A673 (cell line): ENCODE measurements at regions of chr1 and their contacts with region 1.

Region 1: DNA sequence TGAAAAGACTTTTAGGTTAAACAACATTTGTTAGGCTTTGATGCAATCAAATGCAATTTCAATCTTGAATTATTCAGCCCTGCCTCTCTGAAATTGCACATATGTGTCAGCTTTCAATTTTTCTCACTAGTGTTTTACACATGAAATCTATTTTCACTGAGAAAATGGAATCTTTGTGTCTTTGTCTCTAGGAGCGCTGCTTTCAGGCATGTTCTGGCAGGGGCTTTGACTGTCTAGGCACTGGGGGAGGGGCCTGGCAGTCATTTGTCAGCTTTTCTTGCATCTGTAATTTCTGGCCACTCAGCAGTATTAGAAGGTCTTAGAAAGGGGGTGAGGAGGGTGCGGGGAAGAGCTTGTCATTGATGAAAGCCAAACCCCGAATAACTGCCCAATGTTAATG is 264.4 kb downstream of the PTPRC start:
- DNase-seq: peak; percentile 93
- H3K4me3 ChIP-seq: peak overlapping the region; percentile 23
- H3K27ac ChIP-seq: peak overlapping the region; percentile 93
- H3K4me1 ChIP-seq: peaks cover 97% of the 10 kb centered on the region
- H3K27me3 ChIP-seq: no peaks in the 10 kb centered on the region
- CTCF ChIP-seq: no peak

Region 2: DNA sequence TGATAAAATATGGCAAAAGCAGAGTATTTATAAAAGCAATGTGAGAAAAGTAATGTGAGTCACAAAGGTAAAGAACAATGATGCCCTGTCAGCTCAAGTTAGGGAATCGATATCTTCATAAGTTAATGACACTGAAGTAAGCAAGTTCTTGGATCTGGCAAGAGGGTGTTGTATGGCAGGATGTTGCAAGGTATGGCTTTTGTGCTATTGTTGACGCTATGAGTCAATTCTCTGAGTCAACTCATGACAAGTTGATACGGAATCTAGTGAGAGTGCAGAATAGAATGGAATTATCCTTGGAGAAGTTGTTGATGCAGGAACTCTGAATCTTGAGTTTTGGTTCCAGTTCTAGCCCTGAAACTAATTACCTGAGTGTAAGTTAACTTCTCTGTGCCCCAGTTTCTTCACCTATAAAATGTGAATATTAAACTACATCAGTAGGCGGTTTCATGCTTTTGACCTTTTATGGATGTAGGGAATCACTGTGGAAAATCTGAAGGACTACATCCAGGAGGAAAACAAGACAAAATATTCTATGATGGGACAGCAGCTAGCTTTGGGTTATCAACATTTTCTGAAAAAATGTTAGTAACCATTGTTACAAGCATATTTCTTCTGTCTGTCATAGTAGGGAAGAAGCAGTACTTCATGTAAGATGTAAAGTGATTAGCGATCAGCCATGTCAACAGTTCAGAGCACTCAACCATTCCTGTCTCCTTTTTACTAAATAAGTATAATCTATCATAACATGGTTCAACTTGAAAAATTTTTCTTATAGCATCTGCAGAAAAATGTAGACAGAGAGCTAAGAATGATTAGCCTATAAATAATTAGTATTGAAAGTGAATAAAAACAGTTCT is 459.6 kb before region 1 on chr1:
- CTCF ChIA-PET with region 1: no interaction called
- POLR2A ChIA-PET with region 1: no interaction called
- intact Hi-C with region 1: no loop called
- DNase-seq: no peak
- H3K4me3 ChIP-seq: no peak overlapping the region
- H3K27ac ChIP-seq: no peak overlapping the region
- H3K4me1 ChIP-seq: no peaks in the 10 kb centered on the region
- H3K27me3 ChIP-seq: no peaks in the 10 kb centered on the region
- CTCF ChIP-seq: no peak

Region 3: GRCh38 chr1:198937231-198938031 is 34.2 kb after region 1 on chr1:
- CTCF ChIA-PET with region 1: no interaction called
- POLR2A ChIA-PET with region 1: no interaction called
- intact Hi-C with region 1: loop called (anchors 2 kb)
- DNase-seq: peak; percentile 98
- H3K4me3 ChIP-seq: peak overlapping the region; percentile 68
- H3K27ac ChIP-seq: peak overlapping the region; percentile 94
- H3K4me1 ChIP-seq: peaks cover 10% of the 10 kb centered on the region
- H3K27me3 ChIP-seq: no peaks in the 10 kb centered on the region
- CTCF ChIP-seq: no peak

Region 4: GRCh38 chr1:199151634-199152425 is 248.6 kb after region 1 on chr1:
- CTCF ChIA-PET with region 1: no interaction called
- POLR2A ChIA-PET with region 1: no interaction called
- intact Hi-C with region 1: loop called (anchors 2 kb)
- DNase-seq: peak; percentile 86
- H3K4me3 ChIP-seq: peak overlapping the region; percentile 27
- H3K27ac ChIP-seq: peak overlapping the region; percentile 100
- H3K4me1 ChIP-seq: peaks cover 66% of the 10 kb centered on the region
- H3K27me3 ChIP-seq: no peaks in the 10 kb centered on the region
- CTCF ChIP-seq: no peak